Panc1 (cell line): ENCODE measurements at regions of chr1 and their contacts with region 1.

Region 1: DNA sequence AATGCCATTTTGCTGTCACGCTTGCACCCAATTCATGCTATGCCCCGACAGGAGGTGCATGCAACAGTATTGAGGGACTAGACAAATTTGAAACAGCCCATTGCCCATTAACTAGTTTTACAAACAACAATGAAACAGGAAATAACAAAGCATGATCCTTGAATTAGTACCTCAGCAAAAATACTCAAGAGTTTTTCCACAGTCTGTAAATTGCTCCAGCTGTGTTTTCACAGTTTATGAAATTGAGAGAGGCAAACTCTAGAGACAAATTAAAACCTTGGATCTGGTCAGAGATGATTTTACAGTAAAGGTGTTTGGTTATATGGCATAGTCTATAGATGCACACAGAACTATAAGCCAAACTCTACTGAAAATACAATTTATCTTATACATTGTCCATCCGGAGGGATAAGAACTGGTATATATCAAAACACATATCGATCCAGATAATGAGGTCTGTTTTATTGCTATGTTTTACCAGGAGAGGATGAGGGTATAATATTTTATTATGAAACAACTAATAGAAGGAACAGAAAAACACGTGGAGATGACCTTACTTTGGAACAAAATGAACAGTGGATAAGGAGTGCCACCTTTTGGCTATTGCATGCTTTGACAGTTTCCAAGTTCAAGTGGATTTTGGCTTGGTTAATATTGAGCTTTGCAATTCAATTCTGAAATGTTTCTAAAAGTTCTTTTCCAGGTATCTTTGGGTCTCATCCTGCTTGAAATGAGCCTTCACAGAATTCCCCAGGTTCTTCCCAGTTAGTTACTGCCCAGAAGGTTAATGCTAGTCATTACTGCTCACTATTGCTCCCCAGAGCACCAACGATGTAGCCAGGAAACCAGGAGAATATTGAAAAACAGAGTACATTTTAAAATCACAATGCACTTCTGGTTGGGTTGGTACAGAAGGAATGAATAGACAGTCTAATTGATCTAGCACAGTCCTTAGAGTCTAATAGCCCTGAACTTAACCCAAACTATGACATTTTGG is 45.7 kb downstream of the ZC3H11B start:
- DNase-seq: peak; percentile 30
- ATAC-seq: peak; percentile 70; the same call in 1 of the 2 replicates
- H3K4me3 ChIP-seq: no peak overlapping the region
- H3K27ac ChIP-seq: no peak overlapping the region
- H3K4me1 ChIP-seq: no peaks in the 10 kb centered on the region
- H3K27me3 ChIP-seq: no peaks in the 10 kb centered on the region; the same call in 1 of the 2 replicates
- CTCF ChIP-seq: peak; percentile 71

Region 2: GRCh38 chr1:219209578-219209977 is 357.7 kb before region 1 on chr1:
- CTCF ChIA-PET with region 1: interaction called, 3 read pairs
- POLR2A ChIA-PET with region 1: no interaction called
- in situ Hi-C with region 1: no loop called
- intact Hi-C with region 1: loop called (anchors 10 kb)
- DNase-seq: no peak
- ATAC-seq: no peak
- H3K4me3 ChIP-seq: no peak overlapping the region
- H3K27ac ChIP-seq: no peak overlapping the region
- H3K4me1 ChIP-seq: no peaks in the 10 kb centered on the region
- H3K27me3 ChIP-seq: no peaks in the 10 kb centered on the region
- CTCF ChIP-seq: no peak

Region 3: GRCh38 chr1:219304227-219305226 is 262.7 kb before region 1 on chr1:
- CTCF ChIA-PET with region 1: no interaction called
- POLR2A ChIA-PET with region 1: no interaction called
- in situ Hi-C with region 1: no loop called
- intact Hi-C with region 1: no loop called
- DNase-seq: peak; percentile 65
- ATAC-seq: peak; percentile 62; the same call in 1 of the 2 replicates
- H3K4me3 ChIP-seq: no peak overlapping the region
- H3K27ac ChIP-seq: no peak overlapping the region
- H3K4me1 ChIP-seq: no peaks in the 10 kb centered on the region
- H3K27me3 ChIP-seq: no peaks in the 10 kb centered on the region
- CTCF ChIP-seq: no peak; the same call in 1 of the 2 replicates

Region 4: GRCh38 chr1:220717800-220718640 is 1150.8 kb after region 1 on chr1:
- CTCF ChIA-PET with region 1: no interaction called
- POLR2A ChIA-PET with region 1: no interaction called
- in situ Hi-C with region 1: no loop called
- intact Hi-C with region 1: no loop called
- DNase-seq: no peak
- ATAC-seq: no peak
- H3K4me3 ChIP-seq: no peak overlapping the region
- H3K27ac ChIP-seq: no peak overlapping the region
- H3K4me1 ChIP-seq: no peaks in the 10 kb centered on the region
- H3K27me3 ChIP-seq: no peaks in the 10 kb centered on the region
- CTCF ChIP-seq: no peak